Caco-2 (cell line): ENCODE measurements at regions of chr5 and their contacts with region 1.

Region 1: GRCh38 chr5:143539742-143540141 is 136.3 kb upstream of the NR3C1 start:
- DNase-seq: no peak
- H3K4me3 ChIP-seq: no peak overlapping the region
- H3K4me3 Mint-ChIP-seq: no peak overlapping the region
- H3K27ac Mint-ChIP-seq: no peak overlapping the region
- H3K4me1 ChIP-seq: peaks cover 10% of the 10 kb centered on the region; the same call in 1 of the 2 replicates
- H3K4me1 Mint-ChIP-seq: peaks cover 24% of the 10 kb centered on the region
- H3K27me3 ChIP-seq: no peaks in the 10 kb centered on the region
- H3K27me3 Mint-ChIP-seq: no peaks in the 10 kb centered on the region
- CTCF ChIP-seq: no peak

Region 2: DNA sequence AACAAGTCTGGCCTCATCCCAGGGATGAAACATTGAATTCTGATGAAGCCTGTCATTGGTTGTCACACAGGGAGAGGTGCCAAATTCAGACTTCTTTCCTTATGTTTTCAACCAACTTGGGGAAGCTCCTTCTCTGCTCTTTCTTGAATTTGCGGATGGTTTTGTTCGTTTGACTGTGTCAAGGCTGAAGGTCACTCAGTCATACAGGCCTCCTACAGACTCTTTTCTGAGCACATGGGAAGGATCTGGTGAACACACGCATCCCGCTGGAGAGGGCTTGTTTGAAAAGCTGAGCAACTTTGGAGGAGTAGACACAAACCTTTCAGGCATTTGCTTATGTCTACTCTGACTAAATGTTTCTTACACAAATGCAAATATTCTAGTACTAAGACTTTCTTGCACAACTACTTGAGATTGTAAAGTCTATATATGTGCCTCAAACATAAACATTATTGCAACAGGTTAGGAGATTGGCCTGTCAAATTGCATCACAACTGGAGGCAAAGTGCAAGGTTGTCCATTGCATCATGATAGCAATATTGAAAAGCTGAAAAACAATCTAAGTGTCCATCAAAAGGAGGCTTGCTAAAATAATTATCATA is 15.3 kb after region 1 on chr5:
- CTCF ChIA-PET with region 1: no interaction called
- POLR2A ChIA-PET with region 1: interaction called, 10 read pairs
- intact Hi-C with region 1: no loop called
- DNase-seq: peak; percentile 53 to 64
- H3K4me3 ChIP-seq: no peak overlapping the region
- H3K4me3 Mint-ChIP-seq: no peak overlapping the region
- H3K27ac Mint-ChIP-seq: peak overlapping the region; percentile 79
- H3K4me1 ChIP-seq: peaks cover 15% of the 10 kb centered on the region
- H3K4me1 Mint-ChIP-seq: peaks cover 20% of the 10 kb centered on the region
- H3K27me3 ChIP-seq: no peaks in the 10 kb centered on the region
- H3K27me3 Mint-ChIP-seq: no peaks in the 10 kb centered on the region
- CTCF ChIP-seq: no peak

Region 3: DNA sequence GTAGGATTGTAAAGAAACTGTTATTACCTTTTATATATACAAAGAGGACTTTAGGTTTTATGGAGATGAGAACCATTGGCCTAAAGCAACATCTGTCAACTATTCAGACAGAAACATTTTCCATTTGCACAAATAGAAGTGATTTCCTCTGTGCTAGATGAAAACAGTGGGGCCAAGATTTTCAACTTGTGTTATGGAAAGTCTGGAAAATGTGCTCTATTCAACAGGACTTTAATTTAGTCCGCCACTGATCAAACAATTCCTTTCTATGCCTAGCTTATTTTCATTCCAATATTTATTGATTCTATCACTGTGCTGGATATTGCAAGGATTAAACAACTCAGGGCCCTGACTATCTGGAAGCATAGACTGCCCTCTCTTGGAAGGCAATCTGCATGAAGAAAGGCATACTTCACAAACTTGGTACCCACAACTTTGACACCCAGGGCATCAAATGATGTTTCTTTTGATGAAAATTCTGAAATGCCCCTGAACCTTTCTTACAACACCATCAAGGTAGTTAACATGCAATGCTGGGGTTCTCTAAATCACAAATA is 145.6 kb after region 1 on chr5:
- CTCF ChIA-PET with region 1: no interaction called
- POLR2A ChIA-PET with region 1: no interaction called
- intact Hi-C with region 1: no loop called
- DNase-seq: no peak
- H3K4me3 ChIP-seq: no peak overlapping the region
- H3K4me3 Mint-ChIP-seq: no peak overlapping the region
- H3K27ac Mint-ChIP-seq: no peak overlapping the region
- H3K4me1 ChIP-seq: peaks cover 32% of the 10 kb centered on the region
- H3K4me1 Mint-ChIP-seq: peaks cover 32% of the 10 kb centered on the region
- H3K27me3 ChIP-seq: no peaks in the 10 kb centered on the region
- H3K27me3 Mint-ChIP-seq: no peaks in the 10 kb centered on the region
- CTCF ChIP-seq: peak in 1 of 2 experiments; percentile 8